PC-9 (cell line): ENCODE measurements at regions of chr3 and their contacts with region 1.

Region 1: GRCh38 chr3:170076715-170077238 is 39.0 kb downstream of the GPR160 start:
- DNase-seq: no peak
- H3K4me3 ChIP-seq: no peak overlapping the region
- H3K27ac ChIP-seq: no peak overlapping the region
- H3K4me1 ChIP-seq: 0 out of 2 replicates have a peak, but pooled peaks cover 4% of the 10 kb centered on the region
- H3K27me3 ChIP-seq: no peaks in the 10 kb centered on the region
- CTCF ChIP-seq: no peak

Region 2: DNA sequence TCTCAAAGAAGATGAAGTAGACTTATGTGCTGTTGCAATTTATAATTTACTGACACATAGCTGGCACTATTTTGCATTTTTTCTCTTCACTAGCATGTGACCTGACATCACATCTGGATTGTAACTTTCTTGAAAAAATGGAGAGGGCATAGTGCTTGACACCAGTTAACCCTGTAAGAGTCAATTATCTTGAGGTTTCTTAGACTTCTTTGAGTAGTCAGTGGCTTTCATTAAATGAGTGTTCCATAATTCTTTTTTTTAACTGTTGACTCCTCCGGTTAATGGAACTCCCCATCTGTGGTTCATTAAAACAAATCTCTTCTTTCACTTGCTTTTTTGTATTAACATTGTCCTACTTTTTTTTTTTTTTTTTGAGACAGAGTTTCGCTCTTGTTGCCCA is 128.5 kb after region 1 on chr3:
- CTCF ChIA-PET with region 1: no interaction called
- POLR2A ChIA-PET with region 1: no interaction called
- intact Hi-C with region 1: no loop called
- DNase-seq: no peak
- H3K4me3 ChIP-seq: no peak overlapping the region
- H3K27ac ChIP-seq: no peak overlapping the region
- H3K4me1 ChIP-seq: no peaks in the 10 kb centered on the region
- H3K27me3 ChIP-seq: no peaks in the 10 kb centered on the region
- CTCF ChIP-seq: no peak

Region 3: DNA sequence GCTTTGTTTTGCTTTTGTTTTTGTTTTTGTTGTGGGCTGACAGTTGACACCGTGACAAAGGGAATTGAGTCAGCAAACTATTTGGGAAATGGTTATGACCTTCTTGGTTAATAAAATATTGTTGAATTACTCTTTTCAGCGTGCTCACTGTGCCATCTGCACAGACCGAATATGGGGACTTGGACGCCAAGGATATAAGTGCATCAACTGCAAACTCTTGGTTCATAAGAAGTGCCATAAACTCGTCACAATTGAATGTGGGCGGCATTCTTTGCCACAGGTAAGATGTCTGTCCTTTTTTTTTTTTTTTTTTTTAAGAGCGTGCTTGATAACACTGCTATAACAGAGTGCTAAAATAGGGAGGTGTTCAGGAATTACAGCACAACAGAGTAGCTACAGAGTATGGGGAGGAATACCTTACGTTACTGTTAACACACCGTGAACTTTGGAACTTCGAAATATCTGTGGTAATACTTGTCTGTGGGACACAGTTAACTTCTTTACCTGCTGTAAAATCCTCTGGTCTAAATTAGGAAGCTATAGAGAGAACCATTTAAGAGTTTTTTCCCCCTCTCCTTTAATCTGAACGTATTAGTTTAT is 193.6 kb after region 1 on chr3:
- CTCF ChIA-PET with region 1: interaction called, 12 read pairs
- POLR2A ChIA-PET with region 1: no interaction called
- intact Hi-C with region 1: no loop called
- DNase-seq: no peak
- H3K4me3 ChIP-seq: no peak overlapping the region
- H3K27ac ChIP-seq: no peak overlapping the region
- H3K4me1 ChIP-seq: no peaks in the 10 kb centered on the region
- H3K27me3 ChIP-seq: no peaks in the 10 kb centered on the region
- CTCF ChIP-seq: no peak